Right cardiac atrium (tissue), 5 donors: ENCODE measurements at regions of chr17 and their contacts with region 1.

Region 1: GRCh38 chr17:54172096-54172984 is 349.6 kb downstream of the KIF2B start:
- DNase-seq: no peak
- ATAC-seq: no peak
- H3K4me3 ChIP-seq: no peak overlapping the region
- H3K27ac ChIP-seq: no peak overlapping the region
- H3K4me1 ChIP-seq: no peaks in the 10 kb centered on the region
- H3K27me3 ChIP-seq: no peaks in the 10 kb centered on the region

Region 2: GRCh38 chr17:53932386-53932785 is 240.0 kb before region 1 on chr17:
- intact Hi-C with region 1: no loop called
- DNase-seq: no peak
- ATAC-seq: no peak
- H3K4me3 ChIP-seq: no peak overlapping the region
- H3K27ac ChIP-seq: no peak overlapping the region
- H3K4me1 ChIP-seq: no peaks in the 10 kb centered on the region
- H3K27me3 ChIP-seq: no peaks in the 10 kb centered on the region

Region 3: GRCh38 chr17:54046570-54046969 is 125.8 kb before region 1 on chr17:
- intact Hi-C with region 1: no loop called
- DNase-seq: no peak
- ATAC-seq: no peak
- H3K4me3 ChIP-seq: no peak overlapping the region
- H3K27ac ChIP-seq: no peak overlapping the region
- H3K4me1 ChIP-seq: no peaks in the 10 kb centered on the region
- H3K27me3 ChIP-seq: no peaks in the 10 kb centered on the region

Region 4: GRCh38 chr17:54111576-54111975 is 60.8 kb before region 1 on chr17:
- intact Hi-C with region 1: loop called in 1 of 4 experiments (anchors 10 kb)
- DNase-seq: no peak
- ATAC-seq: no peak
- H3K4me3 ChIP-seq: no peak overlapping the region
- H3K27ac ChIP-seq: no peak overlapping the region
- H3K4me1 ChIP-seq: no peaks in the 10 kb centered on the region
- H3K27me3 ChIP-seq: no peaks in the 10 kb centered on the region

Region 5: DNA sequence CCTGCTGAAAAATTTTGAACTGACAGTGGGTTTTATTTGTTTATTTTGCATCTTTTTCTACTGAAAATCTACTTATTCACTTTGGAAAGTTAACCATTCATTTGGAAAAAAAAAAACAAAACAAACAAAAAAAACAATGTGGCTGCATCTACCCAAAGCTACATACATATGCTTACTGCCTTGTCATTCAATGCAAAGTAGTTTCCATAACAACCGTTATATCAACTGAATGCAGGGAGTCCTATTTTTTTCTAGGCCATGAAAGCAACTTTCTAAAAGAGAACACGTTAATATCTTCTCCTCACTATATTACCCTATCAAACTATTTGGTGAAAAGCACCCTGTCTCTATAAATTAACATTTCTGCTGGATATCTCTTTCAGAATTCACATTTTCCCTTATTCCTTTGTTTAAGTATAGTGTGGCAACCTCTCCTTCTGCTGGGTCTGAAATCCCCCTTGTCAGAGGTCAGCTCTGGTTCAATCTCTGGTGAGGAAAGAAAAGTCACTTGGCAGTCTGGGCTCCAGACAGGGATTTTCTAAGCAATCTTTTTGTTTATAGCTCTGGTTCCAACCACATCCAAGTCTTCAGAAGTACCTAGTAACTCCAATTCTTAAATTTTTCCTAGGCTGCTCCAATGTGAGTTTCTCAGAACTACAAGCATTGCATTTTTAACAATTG is 199.9 kb after region 1 on chr17:
- intact Hi-C with region 1: no loop called
- DNase-seq: no peak
- ATAC-seq: no peak
- H3K4me3 ChIP-seq: no peak overlapping the region
- H3K27ac ChIP-seq: no peak overlapping the region
- H3K4me1 ChIP-seq: no peaks in the 10 kb centered on the region
- H3K27me3 ChIP-seq: no peaks in the 10 kb centered on the region